Naive thymus-derived CD8-positive, alpha-beta T cell (primary cell): ENCODE measurements at regions of chr16 and their contacts with region 1.

Region 1: DNA sequence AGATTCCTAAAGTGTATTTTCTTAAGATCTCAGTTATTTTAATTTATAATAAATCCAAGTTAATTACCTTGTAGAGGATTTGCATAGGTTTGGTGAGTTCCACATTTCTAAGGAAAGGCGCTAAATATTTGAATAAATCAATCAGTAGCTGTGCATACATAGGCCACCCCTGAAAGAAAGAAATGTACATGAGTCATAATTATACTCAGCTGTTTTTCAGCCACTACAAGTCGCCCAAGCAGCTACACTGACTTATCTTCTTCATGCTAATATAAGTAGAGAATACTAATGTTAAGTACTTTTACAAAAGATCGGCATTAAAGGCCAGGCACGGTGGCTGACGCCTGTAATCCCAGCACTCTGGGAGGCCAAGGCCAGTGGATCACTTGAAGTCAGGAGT is 14.9 kb downstream of the SETD6 start:
- DNase-seq: no peak
- ATAC-seq: no peak
- H3K4me3 Mint-ChIP-seq: no peak overlapping the region
- H3K27ac Mint-ChIP-seq: peak overlapping the region in 1 of 10 donors; percentile 73
- H3K4me1 Mint-ChIP-seq: no peaks in the 10 kb centered on the region
- H3K27me3 Mint-ChIP-seq: no peaks in the 10 kb centered on the region

Region 2: GRCh38 chr16:58563235-58563634 is 33.1 kb after region 1 on chr16:
- POLR2A ChIA-PET with region 1: interaction called, 10 read pairs
- DNase-seq: no peak
- ATAC-seq: no peak
- H3K4me3 Mint-ChIP-seq: no peak overlapping the region
- H3K27ac Mint-ChIP-seq: peak overlapping the region in 2 of 10 donors; percentile 1 to 51
- H3K4me1 Mint-ChIP-seq: peaks cover 3 to 12% (median 8%) of the 10 kb centered on the region in 4 donors
- H3K27me3 Mint-ChIP-seq: no peaks in the 10 kb centered on the region